Endothelial cell of umbilical vein (primary cell): ENCODE measurements at regions of chr20 and their contacts with region 1.

Region 1: GRCh38 chr20:10381493-10381892 is 52.5 kb downstream of the MKKS start:
- DNase-seq: peak; percentile 31
- H3K4me3 ChIP-seq: no peak overlapping the region
- H3K27ac ChIP-seq: no peak overlapping the region
- H3K4me1 ChIP-seq: peaks cover 7% of the 10 kb centered on the region
- H3K27me3 ChIP-seq: no peaks in the 10 kb centered on the region
- CTCF ChIP-seq: peak in 1 of 2 donors; percentile 15
- POLR2A ChIP-seq: no peak

Region 2: DNA sequence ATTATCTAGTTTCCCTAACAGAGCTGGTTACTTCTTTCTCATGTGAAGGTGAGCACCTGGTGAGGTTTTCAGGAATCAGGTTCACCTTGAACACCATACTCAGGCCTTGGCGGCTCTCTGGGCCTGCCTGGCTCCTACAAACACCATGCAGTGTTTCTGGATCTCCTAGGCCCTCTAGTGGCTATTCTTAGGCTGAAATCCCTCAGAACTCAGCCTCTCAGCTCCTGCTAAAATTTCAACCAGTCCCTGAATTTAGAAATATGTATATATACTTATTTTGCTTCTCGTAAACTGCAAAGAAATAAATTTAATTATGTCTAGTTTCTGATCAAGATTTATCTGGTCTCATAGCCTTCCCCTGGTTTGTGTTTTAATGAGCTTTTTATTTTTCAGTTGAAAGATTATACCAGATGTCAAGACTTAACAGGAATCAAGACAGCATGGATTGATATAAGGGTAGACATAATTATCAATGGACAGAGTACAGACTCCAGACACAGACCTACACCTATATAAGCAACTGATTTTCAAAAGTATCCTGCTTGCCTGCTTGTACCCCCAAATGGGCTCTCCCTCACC is 290.8 kb before region 1 on chr20:
- CTCF ChIA-PET with region 1: interaction called, 4 read pairs
- POLR2A ChIA-PET with region 1: no interaction called
- dilution Hi-C with region 1: no loop called
- intact Hi-C with region 1: loop called (anchors 2 kb)
- DNase-seq: peak; percentile 67
- H3K4me3 ChIP-seq: no peak overlapping the region
- H3K27ac ChIP-seq: no peak overlapping the region
- H3K4me1 ChIP-seq: no peaks in the 10 kb centered on the region
- H3K27me3 ChIP-seq: no peaks in the 10 kb centered on the region
- CTCF ChIP-seq: peak; percentile 69 to 78
- POLR2A ChIP-seq: no peak

Region 3: GRCh38 chr20:10113746-10114145 is 267.7 kb before region 1 on chr20:
- CTCF ChIA-PET with region 1: no interaction called
- POLR2A ChIA-PET with region 1: interaction called, 13 read pairs
- dilution Hi-C with region 1: no loop called
- intact Hi-C with region 1: no loop called
- DNase-seq: no peak
- H3K4me3 ChIP-seq: no peak overlapping the region
- H3K27ac ChIP-seq: no peak overlapping the region
- H3K4me1 ChIP-seq: no peaks in the 10 kb centered on the region
- H3K27me3 ChIP-seq: no peaks in the 10 kb centered on the region
- CTCF ChIP-seq: no peak
- POLR2A ChIP-seq: no peak

Region 4: GRCh38 chr20:10316582-10316981 is 64.9 kb before region 1 on chr20:
- CTCF ChIA-PET with region 1: interaction called, 7 read pairs
- POLR2A ChIA-PET with region 1: no interaction called
- dilution Hi-C with region 1: no loop called
- intact Hi-C with region 1: loop called (anchors 1 kb)
- DNase-seq: peak; percentile 35
- H3K4me3 ChIP-seq: no peak overlapping the region
- H3K27ac ChIP-seq: no peak overlapping the region
- H3K4me1 ChIP-seq: no peaks in the 10 kb centered on the region
- H3K27me3 ChIP-seq: no peaks in the 10 kb centered on the region
- CTCF ChIP-seq: peak; percentile 14 to 37
- POLR2A ChIP-seq: no peak

Region 5: DNA sequence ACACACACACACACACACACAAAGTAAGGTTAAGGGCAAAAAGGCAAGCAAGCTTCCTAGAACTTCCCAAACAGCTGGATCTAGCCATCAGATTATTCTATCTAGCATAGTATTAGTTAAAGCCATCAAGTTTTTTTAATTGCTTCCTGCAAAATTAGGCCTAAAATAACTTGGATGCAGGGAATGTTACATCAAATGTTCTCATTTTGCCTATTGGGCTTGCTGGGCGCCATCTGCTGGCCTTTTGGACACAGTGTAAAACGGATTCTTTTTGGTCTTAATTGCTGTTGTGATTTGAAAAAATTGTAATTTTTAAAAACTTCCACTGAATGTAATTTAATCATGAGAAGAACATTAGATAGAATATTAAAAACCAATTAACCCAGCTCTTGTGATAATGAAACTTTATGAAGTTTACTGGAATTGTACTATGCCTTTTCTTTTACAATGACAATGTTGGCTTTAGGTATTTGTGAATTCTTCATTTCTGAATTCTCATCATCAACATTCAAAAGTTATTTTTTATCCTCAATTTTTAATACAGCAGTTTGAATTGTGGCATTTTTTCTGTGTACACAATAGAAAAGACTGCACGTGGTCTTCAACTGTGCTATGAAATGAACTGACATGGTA is 45.7 kb after region 1 on chr20:
- CTCF ChIA-PET with region 1: interaction called, 3 read pairs
- POLR2A ChIA-PET with region 1: no interaction called
- dilution Hi-C with region 1: no loop called
- intact Hi-C with region 1: loop called (anchors 1 kb)
- DNase-seq: peak; percentile 79
- H3K4me3 ChIP-seq: no peak overlapping the region
- H3K27ac ChIP-seq: no peak overlapping the region
- H3K4me1 ChIP-seq: peaks cover 8% of the 10 kb centered on the region
- H3K27me3 ChIP-seq: no peaks in the 10 kb centered on the region
- CTCF ChIP-seq: peak; percentile 66 to 79
- POLR2A ChIP-seq: no peak

Region 6: GRCh38 chr20:10466325-10466724 is 84.8 kb after region 1 on chr20:
- CTCF ChIA-PET with region 1: no interaction called
- POLR2A ChIA-PET with region 1: no interaction called
- dilution Hi-C with region 1: no loop called
- intact Hi-C with region 1: no loop called
- DNase-seq: peak; percentile 86
- H3K4me3 ChIP-seq: no peak overlapping the region
- H3K27ac ChIP-seq: peak overlapping the region; percentile 45
- H3K4me1 ChIP-seq: peaks cover 51% of the 10 kb centered on the region
- H3K27me3 ChIP-seq: no peaks in the 10 kb centered on the region
- CTCF ChIP-seq: no peak
- POLR2A ChIP-seq: no peak